OCI-LY7 (cell line): ENCODE measurements at regions of chr20 and their contacts with region 1.

Region 1: DNA sequence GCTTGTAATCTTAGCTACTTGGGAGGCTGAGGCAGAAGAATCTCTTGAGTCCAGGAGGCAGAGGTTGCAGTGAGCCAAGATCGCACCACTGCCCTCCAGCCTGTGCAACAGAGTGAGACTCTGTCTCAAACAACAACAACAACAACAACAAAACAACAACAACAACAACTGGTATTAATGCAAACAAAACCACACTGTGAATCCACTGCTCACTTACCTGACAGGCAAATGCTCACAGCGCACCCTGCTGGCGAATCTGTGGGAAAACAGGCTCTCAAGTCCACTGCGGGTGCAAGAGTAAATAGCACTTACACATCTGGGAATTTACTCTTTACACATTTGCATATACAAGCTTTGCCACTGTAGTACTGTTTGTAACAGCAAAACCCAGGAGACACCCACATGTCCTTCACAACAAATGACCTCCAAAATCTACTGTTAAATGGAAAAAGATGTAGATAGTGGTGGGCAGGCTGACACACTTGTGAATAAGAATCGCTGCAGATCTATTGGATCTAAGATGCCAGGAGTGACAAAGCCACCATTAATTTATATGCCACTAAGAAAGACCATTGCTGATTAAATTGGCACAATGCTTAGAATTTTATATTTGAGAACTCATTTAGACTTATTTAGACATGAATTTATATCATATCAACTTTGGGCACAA is 29.3 kb downstream of the NSFL1C start:
- DNase-seq: peak; percentile 80
- H3K4me3 ChIP-seq: no peak overlapping the region
- H3K27ac ChIP-seq: no peak overlapping the region
- H3K4me1 ChIP-seq: peaks cover 19% of the 10 kb centered on the region
- CTCF ChIP-seq: peak; percentile 90

Region 2: DNA sequence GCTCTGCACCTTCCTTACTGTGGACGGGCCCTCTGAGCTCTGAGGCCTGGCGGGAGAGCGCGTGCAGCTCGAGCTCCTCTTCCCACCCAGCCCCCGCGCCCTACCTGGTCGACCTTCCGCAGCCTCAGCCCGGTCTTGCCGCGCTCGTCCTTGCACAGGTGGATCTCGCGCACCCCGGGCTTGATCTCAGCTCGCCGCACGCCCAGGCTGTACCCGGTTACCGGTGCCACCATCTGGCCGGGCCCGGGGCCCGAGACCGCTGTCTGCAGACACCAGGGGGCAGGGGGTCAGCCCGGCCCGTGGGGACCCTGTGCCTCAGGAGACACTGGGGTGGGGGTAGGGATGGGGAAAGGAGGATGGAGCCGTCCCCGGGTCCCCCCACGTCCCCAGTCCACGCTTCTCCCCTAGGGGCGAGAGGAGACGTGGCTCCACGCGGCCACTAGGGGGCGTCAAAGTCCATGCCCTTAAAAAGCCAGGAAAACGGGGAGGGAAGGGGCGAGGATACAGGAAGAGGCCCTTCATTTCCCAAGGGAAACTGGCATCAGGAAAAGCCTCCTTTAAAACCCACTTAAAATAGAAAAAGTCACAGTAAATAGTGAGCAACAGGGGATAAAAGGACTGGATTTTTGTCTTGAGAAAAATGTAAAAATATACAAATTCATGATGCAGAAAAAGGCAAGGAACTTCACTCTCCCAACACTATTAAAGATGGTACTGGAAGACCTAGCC is 124.0 kb before region 1 on chr20:
- CTCF ChIA-PET with region 1: interaction called, 3 read pairs
- POLR2A ChIA-PET with region 1: no interaction called
- intact Hi-C with region 1: loop called (anchors 1 kb)
- DNase-seq: peak; percentile 58
- H3K4me3 ChIP-seq: no peak overlapping the region
- H3K27ac ChIP-seq: no peak overlapping the region
- H3K4me1 ChIP-seq: peaks cover 4% of the 10 kb centered on the region
- CTCF ChIP-seq: peak; percentile 98

Region 3: DNA sequence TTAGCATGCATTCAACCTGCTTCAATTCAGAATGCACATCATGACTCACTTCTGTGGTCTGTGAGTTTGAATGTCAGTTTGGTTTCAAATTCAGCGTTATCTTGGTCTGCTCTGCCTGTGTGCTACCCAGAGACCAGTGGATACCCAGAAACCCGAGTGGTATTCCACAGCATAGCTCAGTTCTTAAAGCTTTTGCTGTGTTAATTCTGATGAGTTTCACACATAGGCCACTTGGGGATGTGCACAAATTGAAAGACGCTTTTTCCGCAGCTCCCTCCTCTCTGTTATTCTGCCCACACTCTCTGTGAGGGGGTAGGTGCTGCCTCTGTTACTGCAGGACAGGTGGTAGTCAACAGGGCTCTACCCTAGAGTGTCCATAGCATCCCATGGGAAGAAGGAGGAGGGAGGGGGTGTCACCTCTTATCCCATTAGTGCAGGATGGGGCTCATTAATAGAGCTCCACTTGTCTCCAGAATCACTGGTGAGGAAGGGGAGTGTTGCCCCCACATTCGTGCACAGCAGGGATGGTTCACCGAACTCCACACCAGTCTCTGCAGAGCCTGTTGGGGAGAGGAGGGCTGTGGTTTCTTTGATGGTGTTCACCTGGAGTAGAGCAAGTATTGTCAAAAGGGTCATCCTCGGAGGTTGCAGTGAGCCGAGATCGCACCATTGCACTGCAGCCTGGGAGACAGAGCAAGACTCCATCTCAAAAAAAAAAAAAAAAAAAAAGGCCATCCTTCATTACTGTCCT is 79.3 kb before region 1 on chr20:
- CTCF ChIA-PET with region 1: no interaction called
- POLR2A ChIA-PET with region 1: no interaction called
- intact Hi-C with region 1: no loop called
- DNase-seq: no peak
- H3K4me3 ChIP-seq: no peak overlapping the region
- H3K27ac ChIP-seq: no peak overlapping the region
- H3K4me1 ChIP-seq: no peaks in the 10 kb centered on the region
- CTCF ChIP-seq: no peak